Heart right ventricle (tissue), 16 donors: ENCODE measurements at regions of chr1 and their contacts with region 1.

Region 1: DNA sequence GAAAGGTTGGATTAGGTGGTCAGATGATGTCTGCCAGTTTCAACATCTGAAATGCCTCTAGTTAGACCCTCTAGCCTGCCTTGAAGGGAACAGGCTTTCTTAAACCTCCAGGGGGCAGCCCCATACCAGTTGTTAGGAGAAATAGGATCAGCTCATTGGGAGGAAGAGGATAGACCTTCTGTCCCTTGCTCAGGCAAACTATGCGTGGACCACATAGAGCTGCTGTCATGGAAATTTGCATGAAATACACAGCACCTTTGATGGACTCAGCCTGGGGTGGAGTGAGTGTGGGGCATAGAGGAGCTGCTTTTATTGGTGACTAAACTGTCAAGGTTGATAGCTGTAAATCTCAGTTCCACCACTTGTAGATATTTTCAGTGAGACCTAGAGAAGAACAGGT is 38.4 kb upstream of the SPAG17 start:
- DNase-seq: peak in 1 of 2 donors; percentile 15
- ATAC-seq: peak in 4 of 8 donors; percentile 57 to 79 (median 64)
- H3K4me3 ChIP-seq: no peak overlapping the region
- H3K27ac ChIP-seq: no peak overlapping the region
- H3K4me1 ChIP-seq: no peaks in the 10 kb centered on the region
- H3K27me3 ChIP-seq: no peaks in the 10 kb centered on the region
- CTCF ChIP-seq: peak; percentile 14 to 56 (median 45)

Region 2: GRCh38 chr1:117605774-117606648 is 617.4 kb before region 1 on chr1 and contains the start of gene TENT5C:
- intact Hi-C with region 1: no loop called
- DNase-seq: peak; percentile 97
- ATAC-seq: peak; percentile 96 to 99 (median 97)
- H3K4me3 ChIP-seq: peak within 1 kb of the TSS; percentile 57 to 94 (median 82)
- H3K27ac ChIP-seq: peak within 1 kb of the TSS in 9 of 10 donors; percentile 70 to 90 (median 82)
- H3K4me1 ChIP-seq: peaks cover 6 to 52% (median 30%) of the 10 kb centered on the region in 9 donors
- H3K27me3 ChIP-seq: peaks cover 0 to 4% (median 0%) of the 10 kb centered on the region in 7 donors
- CTCF ChIP-seq: no peak
- total RNA-seq, gene TENT5C: 3.1 to 23.1 (median 13.0) TPM

Region 3: DNA sequence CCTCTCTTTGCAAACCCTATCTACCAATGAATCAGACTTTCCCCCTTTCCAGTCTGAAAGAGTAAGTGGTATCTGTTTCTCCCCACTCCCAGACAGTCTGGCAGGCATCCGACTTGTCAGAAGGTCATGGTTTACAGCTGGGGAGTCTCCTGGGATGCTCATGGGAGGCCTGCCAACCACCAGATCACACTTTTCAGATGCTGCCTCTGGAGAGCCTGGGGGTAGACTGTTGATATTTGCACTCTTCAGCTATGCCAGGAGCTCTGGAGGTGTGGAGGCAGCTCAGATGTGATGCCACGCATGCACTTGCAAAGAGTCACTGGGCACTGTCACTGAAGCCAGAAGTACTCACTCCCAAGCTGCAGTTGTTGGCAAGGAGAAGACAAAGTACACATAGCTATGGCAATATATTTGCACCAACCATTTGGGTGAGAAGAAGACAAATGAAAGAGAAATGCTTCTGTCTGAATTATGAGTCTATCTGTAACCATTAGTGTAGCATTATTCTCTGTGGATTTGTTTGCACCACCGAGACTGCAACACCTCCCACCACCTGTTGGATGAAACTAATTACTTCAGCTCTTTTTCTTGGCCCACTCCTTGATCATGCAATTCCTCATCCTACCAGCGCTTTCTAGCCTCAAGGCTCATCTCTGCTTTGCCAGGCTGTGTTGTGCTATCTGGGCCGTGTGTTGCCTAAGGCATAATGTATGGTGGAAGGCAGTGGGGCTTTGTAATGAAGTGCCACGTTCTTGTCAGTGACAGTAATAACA is 94.6 kb after region 1 on chr1:
- intact Hi-C with region 1: no loop called
- DNase-seq: peak in 1 of 2 donors; percentile 11
- ATAC-seq: peak in 1 of 8 donors; percentile 33
- H3K4me3 ChIP-seq: no peak overlapping the region
- H3K27ac ChIP-seq: no peak overlapping the region
- H3K4me1 ChIP-seq: peaks cover 0 to 4% (median 0%) of the 10 kb centered on the region in 9 donors
- H3K27me3 ChIP-seq: no peaks in the 10 kb centered on the region
- CTCF ChIP-seq: no peak

Region 4: GRCh38 chr1:118404024-118404423 is 180.6 kb after region 1 on chr1:
- intact Hi-C with region 1: no loop called
- DNase-seq: no peak
- ATAC-seq: no peak
- H3K4me3 ChIP-seq: no peak overlapping the region
- H3K27ac ChIP-seq: no peak overlapping the region
- H3K4me1 ChIP-seq: no peaks in the 10 kb centered on the region
- H3K27me3 ChIP-seq: no peaks in the 10 kb centered on the region
- CTCF ChIP-seq: no peak

Region 5: DNA sequence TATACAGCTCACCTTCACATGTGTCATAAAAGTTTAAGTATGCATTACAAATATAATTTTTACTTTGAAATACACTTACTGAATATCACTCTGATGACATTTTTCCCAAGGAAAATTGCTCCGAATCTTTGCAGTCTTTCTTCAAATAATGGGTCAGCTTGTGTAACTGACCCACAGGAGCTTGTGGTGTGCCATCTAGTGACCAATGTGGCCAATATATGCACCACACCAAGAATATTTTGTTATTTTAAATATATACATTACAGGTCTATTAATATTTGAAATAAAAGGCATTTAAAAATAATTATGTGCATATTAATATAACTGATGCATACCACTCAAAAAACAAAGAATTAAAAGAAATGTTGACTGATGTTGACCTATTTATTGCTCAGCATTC is 493.4 kb after region 1 on chr1:
- intact Hi-C with region 1: loop called in 1 of 10 experiments (anchors 5 kb)
- DNase-seq: no peak
- ATAC-seq: no peak
- H3K4me3 ChIP-seq: no peak overlapping the region
- H3K27ac ChIP-seq: no peak overlapping the region
- H3K4me1 ChIP-seq: peaks cover 0 to 14% (median 0%) of the 10 kb centered on the region in 9 donors
- H3K27me3 ChIP-seq: no peaks in the 10 kb centered on the region
- CTCF ChIP-seq: peak in 7 of 9 donors; percentile 8 to 47 (median 22)

Region 6: DNA sequence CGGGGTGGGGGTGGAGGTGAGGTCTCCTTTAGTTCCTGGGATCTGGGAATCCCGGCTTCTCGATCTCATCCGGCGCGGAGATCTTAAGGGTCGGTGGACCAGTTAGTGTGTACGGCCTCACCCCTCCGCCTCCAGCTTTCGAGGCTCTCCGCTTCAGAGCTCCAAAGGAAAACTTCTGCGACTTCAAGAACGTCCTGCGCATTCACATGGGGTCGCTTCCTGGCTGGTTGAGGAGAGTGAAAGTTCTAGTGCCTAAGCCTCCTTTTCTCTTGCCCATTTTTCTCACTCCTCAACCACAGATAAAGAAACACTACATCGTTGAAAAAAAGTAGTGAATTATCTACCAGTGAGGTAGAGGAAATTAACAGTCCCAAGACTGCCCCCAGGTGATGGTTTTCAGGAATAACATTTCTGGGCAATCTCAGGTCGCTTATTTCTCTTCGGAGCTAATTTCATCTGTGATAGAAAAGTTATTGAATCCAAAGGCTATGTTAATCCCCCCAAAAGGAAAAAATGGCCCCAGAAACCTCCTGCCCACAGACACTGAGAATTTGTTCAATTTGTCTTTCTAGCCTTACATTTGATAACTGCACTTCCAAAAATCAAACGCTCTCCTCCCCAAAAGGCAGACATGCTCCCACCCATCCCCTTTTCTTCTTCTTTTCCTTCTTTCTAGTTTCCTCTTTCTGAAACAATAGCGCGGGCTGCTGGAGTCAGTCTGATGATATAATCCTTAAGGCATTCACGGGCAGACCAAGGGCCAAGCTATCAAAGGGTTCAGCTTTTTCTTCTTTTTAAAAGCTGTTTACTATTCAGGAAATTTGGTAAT is 785.3 kb after region 1 on chr1:
- intact Hi-C with region 1: loop called in 5 of 10 experiments (anchors 1 to 5 kb)
- DNase-seq: peak in 1 of 2 donors; percentile 36
- ATAC-seq: peak in 7 of 8 donors; percentile 53 to 85 (median 72)
- H3K4me3 ChIP-seq: peak overlapping the region; percentile 7 to 39 (median 32)
- H3K27ac ChIP-seq: no peak overlapping the region
- H3K4me1 ChIP-seq: peaks cover 10 to 32% (median 19%) of the 10 kb centered on the region in 9 donors
- H3K27me3 ChIP-seq: peaks cover 23 to 77% (median 63%) of the 10 kb centered on the region in 7 donors
- CTCF ChIP-seq: peak; percentile 26 to 74 (median 65)